Spleen (tissue), 13 donors: ENCODE measurements at regions of chr17 and their contacts with region 1.

Region 1: DNA sequence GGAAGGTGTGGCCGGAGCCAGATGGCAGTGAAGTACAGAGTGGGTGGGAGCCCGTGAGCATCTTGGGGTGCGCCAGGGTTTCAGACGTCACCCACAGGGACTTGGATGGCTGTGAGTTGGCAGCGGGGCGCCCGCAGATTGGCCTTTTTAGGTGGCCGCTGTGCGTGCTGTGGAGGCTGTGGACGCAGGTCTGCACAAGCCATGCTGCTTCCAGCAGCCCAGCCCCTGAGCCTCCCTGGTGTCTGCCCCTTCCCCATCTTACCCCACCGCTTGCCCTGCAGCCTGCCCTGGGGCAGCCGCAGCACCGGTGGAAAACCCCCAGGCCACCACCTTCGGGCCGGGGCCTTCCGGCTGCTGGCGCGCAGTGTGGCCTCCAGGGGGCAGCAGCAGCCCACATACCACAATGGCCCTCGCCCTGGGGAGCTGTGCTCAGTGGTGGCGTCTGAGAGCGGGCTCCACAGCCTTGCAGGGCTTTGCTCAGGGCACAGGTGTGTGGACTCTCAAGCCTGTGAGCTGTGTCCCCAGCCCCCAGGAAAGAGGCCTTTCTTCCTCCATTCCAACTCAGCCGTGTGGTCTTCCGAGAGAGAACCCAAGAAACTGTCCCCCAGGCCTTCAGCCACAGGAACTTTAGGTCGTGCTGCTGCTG is 11.8 kb downstream of the ENDOV start:
- DNase-seq: peak; percentile 95
- H3K4me3 ChIP-seq: no peak overlapping the region
- H3K27ac ChIP-seq: no peak overlapping the region
- H3K4me1 ChIP-seq: peaks cover 7 to 58% (median 31%) of the 10 kb centered on the region in 6 donors
- H3K27me3 ChIP-seq: no peaks in the 10 kb centered on the region
- CTCF ChIP-seq: peak; percentile 97 to 100 (median 99)
- POLR2A ChIP-seq: no peak

Region 2: GRCh38 chr17:80575057-80575875 is 148.5 kb after region 1 on chr17:
- intact Hi-C with region 1: loop called (anchors 10 kb)
- DNase-seq: peak; percentile 97
- H3K4me3 ChIP-seq: no peak overlapping the region
- H3K27ac ChIP-seq: no peak overlapping the region
- H3K4me1 ChIP-seq: peaks cover 0 to 21% (median 11%) of the 10 kb centered on the region in 6 donors
- H3K27me3 ChIP-seq: no peaks in the 10 kb centered on the region
- CTCF ChIP-seq: peak; percentile 96 to 100 (median 99)
- POLR2A ChIP-seq: no peak

Region 3: GRCh38 chr17:80978499-80979497 is 552.0 kb after region 1 on chr17:
- intact Hi-C with region 1: loop called (anchors 5 kb)
- DNase-seq: peak; percentile 75
- H3K4me3 ChIP-seq: no peak overlapping the region
- H3K27ac ChIP-seq: peak overlapping the region in 7 of 8 donors; percentile 22 to 77 (median 63)
- H3K4me1 ChIP-seq: peaks cover 7 to 36% (median 27%) of the 10 kb centered on the region in 6 donors
- H3K27me3 ChIP-seq: peaks cover 0 to 35% (median 0%) of the 10 kb centered on the region in 7 donors
- CTCF ChIP-seq: no peak
- POLR2A ChIP-seq: no peak